IMR-90 (cell line): ENCODE measurements at regions of chr4 and their contacts with region 1.

Region 1: DNA sequence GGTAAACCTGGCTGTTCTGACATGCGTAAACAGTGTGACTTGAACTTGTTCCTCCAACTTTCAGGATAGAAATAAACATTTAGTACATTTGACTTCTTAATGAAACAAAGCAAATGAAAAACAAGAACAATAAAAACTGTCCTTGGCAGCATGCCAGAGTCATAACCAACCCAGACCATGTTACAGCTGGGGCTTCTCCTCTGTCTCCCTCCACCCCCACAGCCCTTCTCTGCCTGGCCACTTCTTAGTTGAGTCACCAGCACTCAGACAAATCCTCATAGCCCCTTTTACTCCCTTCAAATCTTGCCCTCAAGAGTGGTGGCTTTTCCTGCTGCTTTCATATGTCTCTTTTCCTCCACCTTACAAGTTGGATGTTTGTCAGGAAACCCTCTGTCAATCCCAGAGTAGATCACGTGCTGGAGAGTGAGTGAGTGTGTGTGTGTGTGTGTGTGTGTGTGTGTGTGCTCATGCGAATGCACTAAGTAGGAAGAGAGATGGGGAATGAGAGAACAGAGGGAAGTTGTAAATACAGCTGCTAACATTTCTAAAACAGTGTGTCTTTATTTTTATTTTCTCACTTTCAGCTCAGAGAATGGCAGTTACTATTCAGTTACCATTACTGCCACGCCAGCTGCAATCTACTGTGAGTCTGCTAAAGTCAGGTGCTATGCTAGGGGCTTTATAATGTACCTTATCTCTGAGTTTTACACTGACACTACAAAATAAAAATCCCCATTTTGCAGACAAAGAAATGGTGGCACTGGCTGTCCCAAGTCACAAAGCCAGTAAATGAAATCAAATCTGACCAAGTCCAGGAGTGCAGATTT is 15.0 kb downstream of the SCARB2 start:
- DNase-seq: peak; percentile 89
- ATAC-seq: peak; percentile 61
- H3K4me3 ChIP-seq: no peak overlapping the region
- H3K27ac ChIP-seq: peak overlapping the region; percentile 91
- H3K4me1 ChIP-seq: peaks cover 38% of the 10 kb centered on the region
- H3K27me3 ChIP-seq: no peaks in the 10 kb centered on the region
- CTCF ChIP-seq: no peak
- POLR2A ChIP-seq: no peak
- RAD21 ChIP-seq: no peak

Region 2: GRCh38 chr4:76213415-76214176 is 15.0 kb after region 1 on chr4 and contains the start of gene SCARB2:
- CTCF ChIA-PET with region 1: interaction called, 3 read pairs
- POLR2A ChIA-PET with region 1: no interaction called
- dilution Hi-C with region 1: no loop called
- in situ Hi-C with region 1: no loop called
- intact Hi-C with region 1: loop called (anchors 2 kb)
- DNase-seq: peak; percentile 84
- ATAC-seq: peak; percentile 93
- H3K4me3 ChIP-seq: peak within 1 kb of the TSS; percentile 87
- H3K27ac ChIP-seq: peak within 1 kb of the TSS; percentile 91
- H3K4me1 ChIP-seq: peaks cover 11% of the 10 kb centered on the region
- H3K27me3 ChIP-seq: no peaks in the 10 kb centered on the region
- CTCF ChIP-seq: no peak
- POLR2A ChIP-seq: peak; percentile 63
- RAD21 ChIP-seq: no peak
- total RNA-seq, gene SCARB2: 89.7 and 102 TPM in 2 replicates

Region 3: DNA sequence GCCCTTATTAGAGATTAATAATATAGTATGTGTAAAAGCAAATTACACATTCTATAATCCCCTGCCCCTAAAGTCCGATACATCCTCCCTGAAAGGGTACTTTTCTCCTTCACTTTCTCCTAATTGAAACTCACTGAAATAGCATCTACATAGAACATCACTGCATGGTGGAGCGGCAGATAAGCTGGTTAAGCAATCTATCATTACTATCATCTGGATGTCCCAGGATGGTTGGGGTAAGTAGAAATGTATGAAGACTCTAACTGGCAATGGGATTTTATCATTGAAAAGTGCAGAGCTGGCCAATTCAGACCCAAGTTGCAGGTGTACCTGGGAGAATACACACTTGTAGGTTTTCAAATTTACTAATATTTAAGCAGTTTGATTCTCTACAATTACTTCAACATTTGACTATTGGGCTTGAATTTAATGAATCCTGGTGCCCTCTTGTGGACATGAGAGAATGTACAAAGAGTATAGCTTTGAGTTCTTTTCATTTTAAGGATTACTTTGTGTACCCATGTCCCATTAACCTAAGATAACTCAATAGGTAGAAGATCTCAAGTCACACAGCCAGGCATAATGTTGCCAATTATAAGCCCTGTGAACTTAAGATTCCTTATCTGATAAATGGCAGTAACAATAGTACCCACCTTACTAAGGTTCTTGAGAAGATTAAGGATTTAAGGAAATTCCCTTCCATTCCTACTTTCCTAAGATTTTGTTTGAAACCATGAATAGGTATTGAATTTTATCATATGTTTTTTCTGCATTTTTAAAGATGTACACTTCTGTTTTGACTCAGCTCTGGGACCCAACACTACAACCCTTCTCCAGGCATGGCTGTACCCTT is 306.2 kb after region 1 on chr4:
- CTCF ChIA-PET with region 1: no interaction called
- POLR2A ChIA-PET with region 1: no interaction called
- dilution Hi-C with region 1: no loop called
- in situ Hi-C with region 1: loop called (anchors 10 kb)
- intact Hi-C with region 1: no loop called
- DNase-seq: peak; percentile 63
- ATAC-seq: peak; percentile 85
- H3K4me3 ChIP-seq: no peak overlapping the region
- H3K27ac ChIP-seq: no peak overlapping the region
- H3K4me1 ChIP-seq: no peaks in the 10 kb centered on the region
- H3K27me3 ChIP-seq: peaks cover 22% of the 10 kb centered on the region
- CTCF ChIP-seq: peak; percentile 69
- POLR2A ChIP-seq: no peak
- RAD21 ChIP-seq: peak; percentile 64